ENCODE measurements at regions of chr3 and their contacts with region 1.

Region 1: DNA sequence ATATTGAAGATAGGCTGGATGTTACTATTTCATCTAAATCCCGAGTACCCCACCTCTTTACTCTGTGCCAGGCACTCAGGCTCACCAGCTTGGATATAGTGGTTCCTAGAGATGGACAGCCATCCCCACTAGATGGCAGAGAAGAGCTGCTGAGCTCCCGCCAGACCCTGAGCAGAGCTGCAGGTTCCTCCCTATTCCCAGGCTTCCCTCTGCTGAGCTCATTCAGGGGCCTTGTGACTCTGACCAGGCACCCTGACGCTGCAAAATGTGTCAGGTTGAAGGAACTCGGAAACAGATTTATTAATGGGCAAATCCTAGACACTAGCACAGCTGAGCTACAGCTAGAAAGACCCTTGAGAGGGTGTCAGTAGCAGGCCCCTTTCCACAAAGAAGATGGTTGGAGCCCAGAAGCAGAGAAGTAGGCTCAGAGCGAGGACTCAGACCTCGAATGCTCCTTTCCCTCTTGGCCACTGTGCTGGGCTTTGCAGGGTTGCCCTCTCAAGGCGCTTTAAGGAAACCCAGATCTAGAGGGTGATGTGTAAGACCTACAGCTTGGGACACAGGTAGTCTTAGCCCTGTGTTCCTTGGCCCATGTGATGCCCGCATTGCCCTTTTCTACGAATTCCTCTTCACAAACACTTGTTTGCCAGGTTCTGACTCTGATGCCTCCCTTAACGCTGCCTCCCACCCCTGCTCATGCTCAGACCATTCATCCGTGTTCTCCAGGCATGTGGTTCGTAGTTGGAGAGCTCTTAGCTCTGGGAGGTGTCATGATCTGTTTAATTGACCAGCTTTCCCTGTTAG is 38.0 kb upstream of the RHO start:
- DNase-seq: peak; percentile 85
- H3K4me3 ChIP-seq: no peak overlapping the region
- H3K27ac ChIP-seq: peak overlapping the region; percentile 40
- H3K27me3 ChIP-seq: no peaks in the 10 kb centered on the region
- CTCF ChIP-seq: peak; percentile 94

Region 2: GRCh38 chr3:129383292-129383860 is 107.1 kb before region 1 on chr3:
- CTCF ChIA-PET with region 1: interaction called, 27 read pairs
- POLR2A ChIA-PET with region 1: no interaction called
- DNase-seq: peak; percentile 49
- H3K4me3 ChIP-seq: no peak overlapping the region
- H3K27ac ChIP-seq: no peak overlapping the region
- H3K27me3 ChIP-seq: no peaks in the 10 kb centered on the region
- CTCF ChIP-seq: peak; percentile 91

Region 3: DNA sequence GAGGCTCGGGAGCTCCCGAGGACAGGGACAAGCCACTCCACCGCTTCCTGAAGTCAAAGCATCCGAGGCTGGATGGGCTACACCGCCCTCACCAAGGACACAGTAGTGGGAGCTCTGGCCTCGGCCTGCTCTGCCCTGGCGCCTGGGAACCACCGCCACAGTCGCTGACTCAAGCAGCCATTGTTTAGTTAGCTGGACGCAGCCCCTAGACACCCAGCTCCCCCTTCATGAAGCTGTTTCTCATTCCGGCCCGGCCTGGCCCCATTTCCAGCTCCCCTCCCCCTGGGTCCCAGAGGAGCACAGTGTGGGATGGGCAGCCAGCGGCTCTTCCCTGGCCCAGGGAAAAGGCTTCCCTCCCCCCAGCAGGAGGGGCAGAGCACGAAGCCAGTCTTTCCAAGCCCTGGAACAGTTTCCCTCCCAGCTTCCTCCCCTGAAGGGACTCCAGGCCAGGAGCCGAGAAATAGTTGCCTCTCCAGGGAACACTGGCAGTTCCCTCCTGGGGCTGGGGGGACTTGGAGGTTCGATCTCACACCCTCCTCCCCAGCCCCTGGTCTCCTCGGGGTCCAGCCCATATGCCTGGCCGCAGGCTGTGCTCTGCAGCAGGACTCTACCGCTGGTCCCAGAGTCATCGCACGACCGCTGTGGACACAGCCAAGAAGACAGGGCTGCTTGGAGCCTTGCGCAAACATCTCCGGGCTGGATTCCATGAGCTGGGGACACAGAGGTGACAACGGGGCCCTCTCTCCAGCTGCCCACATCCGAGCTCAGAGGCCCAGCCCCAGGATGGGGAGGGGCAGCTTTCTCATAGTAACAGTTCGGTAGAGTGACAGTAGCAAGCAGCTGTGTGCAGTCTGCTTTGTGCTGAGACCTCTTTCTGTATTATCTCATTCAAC is 106.0 kb after region 1 on chr3:
- CTCF ChIA-PET with region 1: interaction called, 11 read pairs
- POLR2A ChIA-PET with region 1: interaction called, 5 read pairs
- DNase-seq: peak; percentile 77
- H3K4me3 ChIP-seq: peak overlapping the region; percentile 10; the same call in 1 of the 2 replicates
- H3K27ac ChIP-seq: peak overlapping the region; percentile 94
- H3K27me3 ChIP-seq: no peaks in the 10 kb centered on the region
- CTCF ChIP-seq: no peak

Region 4: GRCh38 chr3:129650256-129650872 is 159.9 kb after region 1 on chr3:
- CTCF ChIA-PET with region 1: interaction called, 27 read pairs
- POLR2A ChIA-PET with region 1: no interaction called
- DNase-seq: no peak
- H3K4me3 ChIP-seq: no peak overlapping the region
- H3K27ac ChIP-seq: no peak overlapping the region
- H3K27me3 ChIP-seq: no peaks in the 10 kb centered on the region
- CTCF ChIP-seq: peak; percentile 79

Region 5: DNA sequence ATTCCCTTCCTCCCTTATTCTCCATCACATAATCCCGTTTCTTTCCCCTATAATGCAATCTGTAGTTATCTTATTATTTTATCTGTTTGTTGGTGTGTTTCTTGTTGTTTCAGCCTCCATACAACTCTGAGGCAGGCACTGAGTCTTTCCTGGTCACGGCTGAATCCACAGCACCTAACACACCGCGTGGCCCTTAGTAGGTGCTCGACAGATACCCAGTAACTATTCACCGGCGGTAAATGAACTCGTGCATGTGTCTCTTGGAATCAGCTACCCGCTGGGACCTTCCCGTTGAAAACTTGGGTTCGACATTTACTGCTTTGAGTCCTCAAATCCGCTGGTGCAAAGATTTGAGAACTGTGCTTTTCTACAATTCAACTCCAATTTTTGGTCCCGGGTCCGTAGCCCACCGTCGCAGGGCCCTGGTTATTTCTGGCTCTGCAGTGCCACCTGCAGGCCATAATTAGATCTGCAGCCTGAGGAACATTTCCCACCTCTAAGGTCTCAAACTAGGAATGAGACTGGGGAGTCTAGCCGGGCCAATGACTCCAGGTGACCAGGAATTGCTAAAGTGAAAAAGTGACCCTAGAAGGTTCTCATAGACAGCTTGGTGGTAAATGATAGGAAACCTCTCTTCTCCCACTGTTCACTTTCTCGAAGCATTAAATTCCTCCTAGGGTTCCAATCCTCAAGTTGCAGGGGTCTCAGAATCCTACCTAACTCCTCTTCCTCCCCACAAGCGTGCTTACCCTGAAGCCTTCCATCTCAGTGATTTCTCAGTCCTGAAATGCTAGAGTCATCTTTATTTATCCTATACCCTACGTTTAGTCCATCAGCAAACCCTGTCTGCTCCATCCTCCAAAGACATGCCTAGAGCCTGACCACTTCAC is 444.0 kb after region 1 on chr3:
- CTCF ChIA-PET with region 1: interaction called, 21 read pairs
- POLR2A ChIA-PET with region 1: no interaction called
- DNase-seq: no peak
- H3K4me3 ChIP-seq: no peak overlapping the region
- H3K27ac ChIP-seq: no peak overlapping the region
- H3K27me3 ChIP-seq: peaks cover 11% of the 10 kb centered on the region
- CTCF ChIP-seq: peak; percentile 84